ENCODE measurements at regions of chr3 and their contacts with region 1.

Region 1: GRCh38 chr3:50121416-50122032 is 32.8 kb downstream of the RBM5 start:
- DNase-seq: peak; percentile 84
- ATAC-seq: peak; percentile 85
- H3K4me3 Mint-ChIP-seq: no peak overlapping the region
- H3K27ac Mint-ChIP-seq: peak overlapping the region; percentile 70; the same call in 1 of the 2 replicates
- H3K4me1 Mint-ChIP-seq: peaks cover 37% of the 10 kb centered on the region
- H3K27me3 Mint-ChIP-seq: no peaks in the 10 kb centered on the region
- CTCF ChIP-seq: peak; percentile 87

Region 2: GRCh38 chr3:50138266-50139200 is 17.0 kb after region 1 on chr3:
- CTCF ChIA-PET with region 1: interaction called, 17 read pairs
- POLR2A ChIA-PET with region 1: interaction called, 8 read pairs
- DNase-seq: peak; percentile 51
- ATAC-seq: peak; percentile 68
- H3K4me3 Mint-ChIP-seq: peak overlapping the region; percentile 58
- H3K27ac Mint-ChIP-seq: peak overlapping the region; percentile 92
- H3K4me1 Mint-ChIP-seq: peaks cover 49% of the 10 kb centered on the region
- H3K27me3 Mint-ChIP-seq: peaks cover 3% of the 10 kb centered on the region; the same call in 1 of the 2 replicates
- CTCF ChIP-seq: no peak

Region 3: DNA sequence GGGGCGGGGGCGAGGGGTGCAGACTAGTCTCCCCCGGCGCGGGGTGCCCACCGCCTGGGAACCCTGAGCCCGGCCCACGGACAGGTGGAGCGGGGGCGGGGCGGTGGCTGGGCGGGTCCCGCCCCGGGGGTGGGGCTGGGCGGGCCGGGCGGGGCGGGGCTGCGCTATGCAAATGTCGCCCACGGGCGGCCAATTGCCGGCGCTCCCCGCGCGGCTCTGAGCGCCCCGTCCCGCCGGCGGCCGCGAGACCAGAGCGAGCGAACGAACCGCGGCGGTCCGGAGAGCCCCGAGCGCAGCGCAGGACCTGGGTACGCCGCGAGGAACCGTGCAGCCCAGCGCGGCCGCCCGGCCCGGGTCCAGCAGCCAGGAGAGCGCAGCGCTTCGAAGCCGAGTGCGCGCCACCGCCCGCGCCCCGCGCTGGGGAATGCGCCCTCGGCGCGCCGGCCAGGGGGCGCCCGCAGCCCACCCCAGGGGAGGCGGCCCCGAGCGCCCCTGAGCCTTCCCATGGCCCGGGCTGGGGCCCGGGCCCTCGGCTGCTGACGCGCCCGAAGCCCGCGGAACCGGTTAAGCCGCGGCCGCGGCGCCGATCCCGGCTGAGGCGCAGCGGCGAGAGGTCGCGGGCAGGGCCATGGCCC is 33.4 kb after region 1 on chr3 and contains the start of gene SEMA3F:
- CTCF ChIA-PET with region 1: interaction called, 13 read pairs
- POLR2A ChIA-PET with region 1: interaction called, 4 read pairs
- DNase-seq: peak; percentile 67
- ATAC-seq: peak; percentile 38
- H3K4me3 Mint-ChIP-seq: peak within 1 kb of the TSS; percentile 95
- H3K27ac Mint-ChIP-seq: peak within 1 kb of the TSS; percentile 84; the same call in 1 of the 2 replicates
- H3K4me1 Mint-ChIP-seq: peaks cover 71% of the 10 kb centered on the region
- H3K27me3 Mint-ChIP-seq: peaks cover 26% of the 10 kb centered on the region
- CTCF ChIP-seq: no peak
- total RNA-seq, gene SEMA3F: 49.0 to 52.0 TPM (median 52.0 TPM) in 3 replicates

Region 4: DNA sequence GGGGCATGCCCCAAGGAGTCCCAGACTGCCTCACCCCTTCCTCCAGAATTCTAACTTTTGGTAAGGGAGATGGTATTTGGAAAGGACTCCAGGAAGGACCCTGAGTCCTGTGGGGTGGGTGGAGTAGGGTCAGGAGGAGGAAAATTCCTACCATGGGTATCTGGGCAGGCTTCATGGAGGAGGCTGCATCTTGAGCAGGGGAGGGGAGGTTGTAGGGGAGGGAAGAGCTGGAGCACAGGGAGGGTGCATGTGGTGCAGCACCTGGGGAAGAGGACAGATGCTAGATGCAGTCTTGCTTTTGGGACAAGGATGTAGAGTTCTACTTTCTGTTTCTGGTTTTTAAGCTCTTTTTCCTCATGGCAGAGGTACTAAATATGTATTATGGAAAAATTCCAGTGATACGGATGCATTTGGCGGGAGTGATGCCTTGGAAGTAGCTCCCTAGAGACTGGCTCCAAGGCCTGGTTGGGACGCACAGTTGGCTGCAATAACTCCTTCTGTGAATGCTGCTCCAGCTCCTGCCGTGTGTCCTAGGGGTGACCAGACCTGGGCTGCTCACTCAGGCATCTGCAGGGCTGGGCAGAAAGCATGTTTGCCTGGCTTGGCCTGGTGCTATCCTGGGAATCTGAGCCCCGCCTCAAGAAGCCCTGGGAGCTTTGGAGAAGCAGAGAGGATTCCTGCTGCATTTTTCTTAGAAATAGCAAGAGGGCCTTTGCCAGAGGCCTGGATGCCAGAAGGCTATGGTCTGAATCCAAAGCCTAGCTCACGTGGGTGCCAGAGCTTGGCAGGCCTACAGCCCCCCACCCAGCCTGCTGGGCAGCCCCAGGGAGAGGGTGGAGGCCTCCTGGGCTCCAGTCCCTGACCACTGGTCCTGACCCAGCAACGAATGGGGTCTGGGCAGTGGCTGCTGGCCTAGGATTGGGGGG is 43.7 kb after region 1 on chr3:
- CTCF ChIA-PET with region 1: interaction called, 14 read pairs
- POLR2A ChIA-PET with region 1: interaction called, 6 read pairs
- DNase-seq: no peak
- ATAC-seq: peak; percentile 11
- H3K4me3 Mint-ChIP-seq: no peak overlapping the region
- H3K27ac Mint-ChIP-seq: peak overlapping the region; percentile 71
- H3K4me1 Mint-ChIP-seq: peaks cover 48% of the 10 kb centered on the region
- H3K27me3 Mint-ChIP-seq: no peaks in the 10 kb centered on the region
- CTCF ChIP-seq: no peak

Region 5: DNA sequence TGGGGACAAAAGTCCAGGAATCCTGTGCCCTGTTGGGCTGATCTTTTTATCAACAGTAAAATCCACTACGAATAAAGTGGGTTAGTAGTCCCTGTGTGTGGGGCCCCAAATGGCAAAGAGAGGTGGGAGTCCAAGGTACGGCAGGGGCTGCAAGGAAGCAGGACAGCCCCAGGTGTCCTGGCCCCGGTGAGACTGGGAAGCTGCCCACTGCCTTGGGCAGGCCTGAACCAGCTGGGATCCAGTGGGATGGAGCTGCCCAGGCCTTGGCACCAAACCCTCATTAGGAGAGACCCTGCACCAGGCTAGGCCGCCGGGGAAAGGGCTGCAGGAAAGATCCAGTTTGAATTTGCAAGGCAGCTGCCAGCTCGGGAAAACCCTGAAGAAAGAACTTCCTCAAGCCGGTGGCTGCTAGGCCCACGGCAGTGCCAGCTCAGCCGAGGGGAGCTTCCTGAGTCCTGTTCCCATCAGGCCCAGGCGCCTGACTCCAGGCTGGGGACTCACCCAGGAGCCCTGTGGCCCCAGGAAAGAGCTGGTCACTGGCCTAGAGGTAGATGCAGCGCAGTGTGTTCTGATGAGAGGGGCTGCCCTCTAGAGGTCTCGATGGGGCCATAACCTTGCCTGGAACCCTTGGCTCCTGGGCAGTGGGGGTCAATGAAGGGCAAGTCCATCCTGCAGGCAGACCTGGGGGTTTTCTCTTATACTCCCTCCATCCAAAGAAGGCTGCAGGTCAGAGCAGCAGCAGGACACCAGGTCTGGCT is 100.1 kb after region 1 on chr3:
- CTCF ChIA-PET with region 1: interaction called, 18 read pairs
- POLR2A ChIA-PET with region 1: no interaction called
- DNase-seq: peak; percentile 78
- ATAC-seq: peak; percentile 84
- H3K4me3 Mint-ChIP-seq: no peak overlapping the region
- H3K27ac Mint-ChIP-seq: no peak overlapping the region; the same call in 1 of the 2 replicates
- H3K4me1 Mint-ChIP-seq: peaks cover 9% of the 10 kb centered on the region
- H3K27me3 Mint-ChIP-seq: peaks cover under 1% of the 10 kb centered on the region
- CTCF ChIP-seq: no peak; the same call in 1 of the 2 replicates

Region 6: DNA sequence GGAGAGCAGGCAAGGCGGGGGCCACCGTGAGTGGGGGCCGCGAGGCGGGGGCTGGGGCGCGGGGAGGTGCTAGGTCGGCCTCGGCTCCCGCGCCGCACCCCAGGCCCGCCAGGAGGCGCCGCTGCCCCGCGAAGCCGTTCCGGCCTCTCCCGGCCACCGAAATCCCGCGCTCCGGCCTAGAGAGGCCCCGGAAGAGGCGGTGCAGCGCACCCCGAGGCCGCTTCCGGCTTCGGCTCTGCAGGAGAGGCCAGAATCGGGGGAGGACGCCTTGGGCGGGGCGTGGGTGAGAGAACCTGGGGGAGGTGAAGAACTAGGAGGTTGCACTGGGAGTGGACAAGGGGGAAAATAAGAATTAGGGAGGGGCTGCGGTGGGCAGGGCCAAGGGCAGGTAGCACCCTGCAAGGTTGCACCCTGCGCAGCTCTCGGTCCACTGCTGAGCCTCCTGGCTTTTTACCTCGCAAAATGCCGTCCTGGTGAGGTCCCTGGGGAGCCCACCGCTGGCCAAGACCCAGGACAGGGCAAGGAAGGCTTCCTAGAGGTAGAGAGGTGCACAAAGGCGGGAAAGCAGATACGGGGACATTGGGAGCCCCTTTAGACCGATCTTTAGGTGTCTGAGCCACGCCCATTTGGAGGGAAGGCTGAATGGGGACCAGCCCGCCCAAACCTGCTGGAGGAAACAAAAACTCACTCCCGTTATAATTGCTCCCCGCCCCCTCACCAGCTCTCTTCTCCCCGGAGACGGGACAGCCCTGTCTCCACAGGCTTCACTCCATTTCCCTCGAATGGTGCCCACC is 106.1 kb after region 1 on chr3:
- CTCF ChIA-PET with region 1: interaction called, 18 read pairs
- POLR2A ChIA-PET with region 1: no interaction called
- DNase-seq: peak; percentile 92
- ATAC-seq: peak; percentile 75
- H3K4me3 Mint-ChIP-seq: peak overlapping the region; percentile 96
- H3K27ac Mint-ChIP-seq: peak overlapping the region; percentile 89
- H3K4me1 Mint-ChIP-seq: peaks cover 24% of the 10 kb centered on the region
- H3K27me3 Mint-ChIP-seq: peaks cover 4% of the 10 kb centered on the region
- CTCF ChIP-seq: peak; percentile 61

Measured in WTC11 (cell line).